ENCODE measurements at regions of chr16 and their contacts with region 1.

Region 1: GRCh38 chr16:3880623-3881498 is at the start of gene CREBBP:
- DNase-seq: peak; percentile 92
- H3K4me3 ChIP-seq: peak within 1 kb of the TSS; percentile 71 to 98 (median 90)
- H3K27ac ChIP-seq: peak within 1 kb of the TSS; percentile 78 to 92 (median 86)
- H3K4me1 ChIP-seq: peaks cover 3 to 43% (median 36%) of the 10 kb centered on the region in 4 donors
- H3K27me3 ChIP-seq: no peaks in the 10 kb centered on the region
- CTCF ChIP-seq: no peak
- EP300 ChIP-seq: no peak
- POLR2A ChIP-seq: no peak
- total RNA-seq, gene CREBBP: 39.5 to 85.3 (median 46.4) TPM

Region 2: DNA sequence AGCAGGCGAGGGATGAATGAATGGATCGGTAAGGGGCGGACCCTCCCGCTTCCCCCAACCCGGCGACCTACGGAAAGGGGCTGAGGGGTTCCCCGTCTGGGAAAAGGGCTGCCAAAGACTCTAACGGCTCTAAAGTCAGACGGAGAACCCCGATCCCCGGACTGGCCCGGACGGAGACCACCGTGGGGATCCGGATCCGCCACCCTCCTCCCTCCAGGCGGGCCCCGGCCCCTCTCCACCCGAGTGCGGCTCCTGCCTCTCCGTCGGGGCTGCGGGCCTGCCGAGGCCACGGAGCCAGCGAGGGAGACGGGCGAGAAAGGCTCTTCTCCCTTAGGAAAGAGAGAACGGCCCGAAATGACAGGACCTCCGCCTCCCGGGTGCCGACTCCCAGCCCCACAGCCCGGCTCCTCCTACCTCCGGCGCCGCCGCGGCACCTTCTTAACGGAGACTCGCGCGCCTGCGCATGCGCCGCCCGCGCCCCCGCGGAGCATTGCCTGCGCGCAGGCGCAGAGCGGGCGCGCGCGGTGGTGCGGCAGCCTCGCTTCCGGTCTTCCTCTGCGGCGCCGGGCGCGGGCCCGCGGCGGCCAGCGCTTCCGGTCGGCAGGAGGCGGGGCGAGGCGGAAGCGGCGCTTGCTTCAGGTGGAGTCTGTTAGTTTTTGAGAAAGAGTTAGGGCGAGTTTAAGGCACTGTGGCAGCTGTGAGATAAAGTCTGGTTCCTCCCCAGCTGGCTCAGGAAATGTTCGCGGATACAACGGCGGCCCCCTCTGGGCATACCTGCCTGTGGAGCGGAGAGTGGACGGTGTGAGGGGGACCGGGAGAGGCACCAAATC is 269.5 kb before region 1 on chr16 and contains the start of gene SLX4:
- intact Hi-C with region 1: loop called (anchors 5 kb)
- DNase-seq: peak; percentile 95
- H3K4me3 ChIP-seq: peak within 1 kb of the TSS; percentile 85 to 98 (median 94)
- H3K27ac ChIP-seq: peak within 1 kb of the TSS; percentile 71 to 88 (median 82)
- H3K4me1 ChIP-seq: peaks cover 0 to 24% (median 16%) of the 10 kb centered on the region in 4 donors
- H3K27me3 ChIP-seq: no peaks in the 10 kb centered on the region
- CTCF ChIP-seq: no peak
- EP300 ChIP-seq: no peak
- POLR2A ChIP-seq: peak in 1 of 2 donors; percentile 36
- total RNA-seq, gene SLX4: 2.1 to 3.9 (median 2.6) TPM

Region 3: GRCh38 chr16:3690470-3690928 is 190.4 kb before region 1 on chr16:
- intact Hi-C with region 1: loop called (anchors 1 kb)
- DNase-seq: peak; percentile 98
- H3K4me3 ChIP-seq: peak overlapping the region in 3 of 4 donors; percentile 35 to 44 (median 37)
- H3K27ac ChIP-seq: peak overlapping the region; percentile 57 to 77 (median 72)
- H3K4me1 ChIP-seq: peaks cover 0 to 17% (median 14%) of the 10 kb centered on the region in 4 donors
- H3K27me3 ChIP-seq: no peaks in the 10 kb centered on the region
- CTCF ChIP-seq: peak; percentile 88 to 95 (median 91)
- EP300 ChIP-seq: no peak
- POLR2A ChIP-seq: no peak

Region 4: DNA sequence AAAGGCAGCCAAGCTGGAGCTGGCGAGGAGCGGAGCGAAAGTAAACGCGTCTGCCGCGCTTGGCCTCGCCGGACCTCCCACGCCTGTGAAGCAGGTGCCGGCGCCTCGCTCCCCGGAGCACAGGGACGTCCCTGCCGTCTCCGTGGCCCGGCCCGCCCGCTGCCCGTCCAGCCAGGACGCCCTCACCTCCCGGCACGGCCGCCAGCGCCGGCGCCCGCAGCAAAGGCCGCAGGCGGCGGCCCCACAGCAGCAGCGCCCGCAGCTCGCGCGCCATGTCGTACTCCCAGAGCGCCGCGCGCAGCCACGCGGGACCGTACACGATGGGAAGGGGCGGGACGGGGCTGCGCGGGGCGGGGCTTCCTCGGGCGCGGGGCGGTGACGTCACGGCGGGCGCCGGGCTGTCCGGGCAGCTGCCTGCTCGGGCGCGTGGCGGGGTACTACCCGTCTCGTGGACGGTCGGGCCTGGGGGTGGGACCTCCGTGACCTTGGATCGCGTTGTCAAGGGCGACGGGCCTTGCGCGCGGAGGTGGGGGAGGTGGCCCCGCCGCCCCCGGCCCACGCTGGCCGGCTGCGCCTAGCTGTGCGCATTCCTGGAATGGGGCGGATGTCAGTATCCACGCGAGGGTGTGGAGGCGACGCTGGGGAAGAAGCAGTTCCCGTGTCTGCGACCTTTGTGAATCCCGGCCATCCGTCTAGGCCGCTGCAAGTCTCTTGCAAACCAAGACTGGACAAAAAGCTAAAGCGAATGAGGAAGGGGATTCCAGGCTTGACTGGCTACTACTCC is 163.4 kb before region 1 on chr16 and contains the start of gene TRAP1:
- intact Hi-C with region 1: loop called (anchors 2 kb)
- DNase-seq: peak; percentile 93
- H3K4me3 ChIP-seq: peak within 1 kb of the TSS; percentile 49 to 89 (median 73)
- H3K27ac ChIP-seq: peak within 1 kb of the TSS; percentile 85 to 91 (median 87)
- H3K4me1 ChIP-seq: peaks cover 0 to 17% (median 10%) of the 10 kb centered on the region in 4 donors
- H3K27me3 ChIP-seq: no peaks in the 10 kb centered on the region
- CTCF ChIP-seq: no peak
- EP300 ChIP-seq: no peak
- POLR2A ChIP-seq: peak; percentile 50 to 63
- total RNA-seq, gene TRAP1: 38.8 to 53.5 (median 47.1) TPM

Region 5: GRCh38 chr16:3774156-3774767 is 106.6 kb before region 1 on chr16:
- intact Hi-C with region 1: loop called (anchors 2 kb)
- DNase-seq: no peak
- H3K4me3 ChIP-seq: no peak overlapping the region
- H3K27ac ChIP-seq: peak overlapping the region in 1 of 4 donors; percentile 7
- H3K4me1 ChIP-seq: peaks cover 0 to 25% (median 18%) of the 10 kb centered on the region in 4 donors
- H3K27me3 ChIP-seq: no peaks in the 10 kb centered on the region
- CTCF ChIP-seq: no peak
- EP300 ChIP-seq: no peak
- POLR2A ChIP-seq: no peak

Region 6: DNA sequence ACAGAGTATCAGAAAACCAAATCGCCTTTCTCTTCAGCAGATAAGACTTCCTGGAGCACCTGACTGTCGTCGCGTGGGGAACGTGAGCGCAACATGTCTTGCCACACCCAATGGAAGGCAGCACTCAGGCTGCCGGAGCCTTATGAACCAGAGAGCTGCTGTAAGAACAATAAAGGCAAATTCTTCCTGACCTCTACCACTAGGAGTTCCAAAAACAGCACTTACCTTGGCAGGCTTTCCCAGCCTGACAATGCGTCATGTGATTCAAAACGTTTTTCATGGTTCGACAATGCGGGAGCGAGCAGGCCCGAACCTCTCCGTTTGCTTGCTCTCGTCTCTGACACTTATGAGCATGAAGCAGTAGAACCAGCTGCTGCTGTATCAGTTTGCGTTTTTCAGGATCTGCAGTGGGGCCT is 87.7 kb before region 1 on chr16:
- intact Hi-C with region 1: loop called (anchors 5 kb)
- DNase-seq: peak; percentile 73
- H3K4me3 ChIP-seq: no peak overlapping the region
- H3K27ac ChIP-seq: peak overlapping the region; percentile 1 to 63 (median 24)
- H3K4me1 ChIP-seq: peaks cover 0 to 52% (median 51%) of the 10 kb centered on the region in 4 donors
- H3K27me3 ChIP-seq: no peaks in the 10 kb centered on the region
- CTCF ChIP-seq: no peak
- EP300 ChIP-seq: no peak
- POLR2A ChIP-seq: no peak